GM13976 (cell line): ENCODE measurements at regions of chr1 and their contacts with region 1.

Region 1: DNA sequence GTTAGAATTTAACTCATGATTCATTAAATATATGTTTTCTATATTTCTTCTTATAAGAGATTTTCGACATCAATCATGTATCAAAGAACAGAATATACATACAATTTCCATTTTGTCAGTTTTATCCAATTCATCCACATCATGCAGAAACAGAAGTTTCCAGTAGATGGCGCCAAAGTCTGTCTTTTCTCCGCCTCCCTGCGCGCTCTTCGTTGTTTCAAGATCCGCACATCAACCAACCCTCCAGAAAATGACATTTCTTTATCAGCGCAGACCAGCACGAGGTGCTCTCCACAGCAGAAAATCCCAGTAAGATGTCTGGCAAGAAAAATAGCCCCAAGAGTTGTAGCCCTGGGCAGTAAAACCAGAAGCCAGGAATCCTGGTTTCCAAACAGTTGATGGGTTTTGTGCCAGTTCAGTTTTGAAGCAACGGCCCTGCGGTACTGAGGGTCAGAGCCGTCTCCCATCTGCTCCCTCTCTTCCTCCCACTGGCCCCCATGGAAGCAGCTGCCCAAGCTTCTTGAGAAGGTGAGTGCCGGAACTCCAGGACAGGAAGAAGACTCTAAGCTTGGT is 38.6 kb upstream of the GPR137B start:
- DNase-seq: peak; percentile 84
- CTCF ChIP-seq: peak; percentile 57

Region 2: DNA sequence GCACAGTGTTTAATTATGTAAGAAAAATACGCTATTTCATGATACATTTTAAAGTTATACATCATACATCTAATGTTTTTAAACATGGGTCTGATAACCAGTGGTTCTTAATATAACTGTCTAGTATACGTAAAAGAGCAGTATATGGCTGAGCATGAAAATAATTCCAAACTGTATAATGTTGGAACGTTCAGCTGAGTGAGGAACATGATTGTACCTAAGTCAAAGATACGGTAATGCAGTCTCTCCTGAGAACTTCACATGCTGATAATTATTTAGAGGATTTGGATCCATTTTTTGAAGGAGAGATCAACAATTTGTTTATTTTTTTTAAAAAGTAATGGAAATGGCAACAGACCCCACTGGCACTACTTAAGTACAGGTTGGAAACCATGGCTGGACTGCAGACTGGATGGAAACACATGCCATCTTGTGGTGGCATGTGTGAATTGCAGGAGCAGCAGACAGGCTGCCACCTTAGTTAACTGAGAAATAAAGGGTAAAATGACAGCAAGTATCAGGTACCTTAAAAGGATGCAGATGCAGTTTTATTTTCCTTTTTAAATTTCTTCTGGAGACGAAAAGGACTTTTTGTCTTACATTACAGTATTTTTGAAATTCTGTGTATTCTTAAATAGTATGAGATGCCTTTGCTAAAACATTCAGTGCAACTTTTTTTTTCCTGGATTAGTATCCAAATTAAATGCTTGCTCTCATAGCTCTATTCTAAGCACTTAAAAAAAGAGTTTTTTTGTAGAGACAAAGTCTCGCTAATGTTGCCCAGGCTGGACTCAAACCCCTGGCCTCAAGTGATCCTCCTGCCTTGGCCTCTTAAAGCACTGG is 765.1 kb after region 1 on chr1:
- in situ Hi-C with region 1: loop called (anchors 25 kb)
- DNase-seq: peak; percentile 42
- CTCF ChIP-seq: peak; percentile 94

Region 3: GRCh38 chr1:237386362-237387143 is 1282.8 kb after region 1 on chr1:
- in situ Hi-C with region 1: loop called (anchors 25 kb)
- DNase-seq: peak; percentile 34
- CTCF ChIP-seq: peak; percentile 53

Region 4: DNA sequence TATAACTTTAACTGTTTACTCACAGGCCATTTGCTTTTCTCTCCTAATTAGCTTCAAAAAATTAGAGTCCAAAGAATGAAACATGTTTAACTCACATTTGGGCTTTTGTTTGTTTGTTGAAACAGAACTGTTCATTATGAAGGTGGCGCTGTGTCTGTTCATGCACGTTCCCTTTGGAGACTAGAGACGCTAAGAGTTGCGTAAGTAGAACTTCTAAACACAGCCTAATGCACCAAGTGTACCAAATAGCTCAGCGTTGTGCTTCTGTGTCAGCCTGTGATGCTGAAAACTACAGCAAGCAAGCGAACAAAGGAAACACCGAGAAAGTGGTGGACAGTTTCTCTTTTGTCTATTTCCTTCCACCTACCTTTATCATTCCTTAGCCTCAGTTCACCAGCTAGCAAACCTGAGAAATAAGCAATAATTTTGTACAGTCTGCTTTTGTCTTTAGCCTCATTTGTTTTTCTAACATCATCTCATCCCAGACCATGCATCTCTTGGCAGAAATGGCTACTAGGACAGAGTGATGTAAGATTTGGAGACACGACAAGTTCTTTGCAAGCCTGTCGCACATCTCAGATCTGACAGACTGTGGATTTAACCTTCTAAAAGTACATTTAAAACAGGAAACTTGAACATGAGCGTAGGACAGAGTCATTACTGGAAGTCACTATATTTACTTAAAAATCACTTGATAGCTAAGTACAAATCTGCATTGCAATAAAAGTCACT is 1313.4 kb after region 1 on chr1:
- in situ Hi-C with region 1: no loop called
- DNase-seq: no peak
- CTCF ChIP-seq: no peak